CD4-positive, alpha-beta memory T cell (primary cell): ENCODE measurements at regions of chr2 and their contacts with region 1.

Region 1: GRCh38 chr2:85595301-85596025 is at the start of gene RNF181:
- DNase-seq: peak; percentile 88 to 97 (median 91)
- H3K4me3 ChIP-seq: peak within 1 kb of the TSS; percentile 49 to 96
- H3K4me3 Mint-ChIP-seq: peak within 1 kb of the TSS; percentile 96 to 99 (median 98)
- H3K27ac ChIP-seq: peak within 1 kb of the TSS; percentile 86
- H3K27ac Mint-ChIP-seq: peak within 1 kb of the TSS; percentile 95 to 99 (median 97)
- H3K4me1 ChIP-seq: peaks cover 26% of the 10 kb centered on the region
- H3K4me1 Mint-ChIP-seq: peaks cover 25 to 42% (median 32%) of the 10 kb centered on the region in 4 donors
- H3K27me3 ChIP-seq: no peaks in the 10 kb centered on the region
- H3K27me3 Mint-ChIP-seq: no peaks in the 10 kb centered on the region
- total RNA-seq, gene RNF181: 73.6 to 77.1 TPM

Region 2: DNA sequence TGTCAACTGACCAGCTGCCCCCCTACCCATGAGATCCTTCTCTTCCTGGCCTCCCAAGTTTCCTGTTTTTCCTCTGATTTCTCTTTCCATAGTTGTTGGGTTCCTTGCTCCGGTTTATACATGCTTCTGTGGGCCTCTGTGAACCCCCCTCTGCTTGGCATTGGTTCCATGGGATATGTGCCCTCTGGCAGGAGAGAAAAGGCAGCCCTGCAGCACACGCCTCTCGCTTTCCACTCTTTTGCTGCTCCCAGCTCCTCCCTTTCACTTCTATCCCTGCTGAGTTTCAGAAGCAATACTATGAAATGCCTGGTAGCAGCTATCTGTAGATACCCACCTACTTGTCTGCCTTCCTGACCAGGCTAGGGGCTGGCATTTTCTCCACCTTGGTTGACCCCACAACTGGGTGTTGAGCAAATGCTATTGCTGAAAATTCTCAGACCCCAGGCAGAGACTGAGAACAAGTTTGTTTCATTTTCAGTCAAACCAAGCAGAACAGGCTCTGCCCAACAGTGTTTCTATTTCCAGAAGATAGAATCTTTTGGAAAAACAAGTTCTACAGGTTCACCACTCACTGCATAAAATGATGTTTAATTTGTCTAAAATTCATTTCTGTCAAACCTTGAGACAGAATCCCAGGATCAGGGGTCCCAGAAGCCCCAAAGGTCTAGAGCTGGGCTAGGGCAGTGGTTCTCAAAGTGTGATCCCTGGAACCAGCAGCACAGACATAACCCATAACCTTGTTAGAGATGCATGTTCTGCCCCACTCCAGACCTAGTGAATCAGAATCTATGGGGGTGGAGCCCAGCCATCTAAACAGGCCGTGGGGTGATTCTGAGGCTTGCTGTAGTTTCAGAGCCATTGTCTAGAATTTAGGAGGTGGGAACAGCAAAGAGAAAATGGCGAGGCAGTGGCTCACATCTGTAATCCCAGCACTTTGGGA is 198.7 kb before region 1 on chr2:
- CTCF ChIA-PET with region 1: no interaction called
- POLR2A ChIA-PET with region 1: no interaction called
- intact Hi-C with region 1: no loop called
- DNase-seq: no peak
- H3K4me3 ChIP-seq: no peak overlapping the region
- H3K4me3 Mint-ChIP-seq: no peak overlapping the region
- H3K27ac ChIP-seq: no peak overlapping the region
- H3K27ac Mint-ChIP-seq: peak overlapping the region in 6 of 7 donors; percentile 24 to 83 (median 46)
- H3K4me1 ChIP-seq: peaks cover 11% of the 10 kb centered on the region
- H3K4me1 Mint-ChIP-seq: peaks cover 4 to 6% (median 5%) of the 10 kb centered on the region in 4 donors
- H3K27me3 ChIP-seq: no peaks in the 10 kb centered on the region
- H3K27me3 Mint-ChIP-seq: no peaks in the 10 kb centered on the region

Region 3: GRCh38 chr2:85420536-85421259 is 174.8 kb before region 1 on chr2:
- CTCF ChIA-PET with region 1: interaction called, 3 read pairs
- POLR2A ChIA-PET with region 1: interaction called, 23 read pairs
- intact Hi-C with region 1: no loop called
- DNase-seq: peak; percentile 81 to 87 (median 81)
- H3K4me3 ChIP-seq: no peak overlapping the region
- H3K4me3 Mint-ChIP-seq: peak overlapping the region; percentile 72 to 84 (median 78)
- H3K27ac ChIP-seq: peak overlapping the region; percentile 12
- H3K27ac Mint-ChIP-seq: peak overlapping the region; percentile 76 to 93 (median 90)
- H3K4me1 ChIP-seq: peaks cover 28% of the 10 kb centered on the region
- H3K4me1 Mint-ChIP-seq: peaks cover 12 to 29% (median 19%) of the 10 kb centered on the region in 4 donors
- H3K27me3 ChIP-seq: no peaks in the 10 kb centered on the region
- H3K27me3 Mint-ChIP-seq: no peaks in the 10 kb centered on the region

Region 4: DNA sequence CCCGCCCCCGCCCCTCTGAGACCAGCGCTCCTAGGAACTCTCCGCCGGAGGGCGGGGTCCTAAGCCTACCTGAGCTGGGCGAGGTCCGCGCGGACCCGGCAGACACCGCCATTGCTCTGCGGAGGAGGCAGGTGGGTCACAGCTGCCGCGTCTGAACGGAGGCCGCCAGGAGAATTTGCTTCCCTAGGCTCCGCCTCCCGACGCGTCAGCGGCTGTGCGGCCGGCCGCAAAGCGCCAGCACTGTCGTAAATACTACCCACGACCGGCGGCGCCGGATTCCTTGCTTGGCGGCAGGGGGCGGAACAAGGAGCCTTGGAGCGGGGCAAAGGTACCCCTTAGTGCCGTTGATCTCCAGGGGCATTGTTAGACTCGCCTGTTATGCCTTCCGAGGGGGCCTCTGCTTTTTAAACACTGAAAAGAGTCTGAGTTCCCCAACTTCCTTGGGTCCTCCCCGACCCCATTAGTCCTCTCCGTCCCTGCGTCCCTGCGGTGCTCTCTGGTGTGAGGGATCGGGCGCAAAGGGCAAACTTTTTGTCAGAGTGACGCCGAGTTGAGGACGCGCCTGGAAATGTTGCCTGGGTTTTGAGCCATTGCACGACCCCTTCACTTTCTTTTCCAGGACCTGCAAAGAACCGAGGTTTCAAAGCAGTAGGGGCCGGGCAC is 34.0 kb before region 1 on chr2 and contains the start of gene GGCX:
- CTCF ChIA-PET with region 1: interaction called, 4 read pairs
- POLR2A ChIA-PET with region 1: interaction called, 30 read pairs
- intact Hi-C with region 1: loop called (anchors 1 kb)
- DNase-seq: peak; percentile 86 to 95 (median 87)
- H3K4me3 ChIP-seq: peak within 1 kb of the TSS; percentile 74 to 97
- H3K4me3 Mint-ChIP-seq: peak within 1 kb of the TSS; percentile 94 to 99 (median 98)
- H3K27ac ChIP-seq: peak within 1 kb of the TSS; percentile 89
- H3K27ac Mint-ChIP-seq: peak within 1 kb of the TSS; percentile 94 to 99 (median 97)
- H3K4me1 ChIP-seq: peaks cover 19% of the 10 kb centered on the region
- H3K4me1 Mint-ChIP-seq: peaks cover 12 to 35% (median 22%) of the 10 kb centered on the region in 4 donors
- H3K27me3 ChIP-seq: no peaks in the 10 kb centered on the region
- H3K27me3 Mint-ChIP-seq: no peaks in the 10 kb centered on the region
- total RNA-seq, gene GGCX: 28.5 to 38.1 TPM

Region 5: DNA sequence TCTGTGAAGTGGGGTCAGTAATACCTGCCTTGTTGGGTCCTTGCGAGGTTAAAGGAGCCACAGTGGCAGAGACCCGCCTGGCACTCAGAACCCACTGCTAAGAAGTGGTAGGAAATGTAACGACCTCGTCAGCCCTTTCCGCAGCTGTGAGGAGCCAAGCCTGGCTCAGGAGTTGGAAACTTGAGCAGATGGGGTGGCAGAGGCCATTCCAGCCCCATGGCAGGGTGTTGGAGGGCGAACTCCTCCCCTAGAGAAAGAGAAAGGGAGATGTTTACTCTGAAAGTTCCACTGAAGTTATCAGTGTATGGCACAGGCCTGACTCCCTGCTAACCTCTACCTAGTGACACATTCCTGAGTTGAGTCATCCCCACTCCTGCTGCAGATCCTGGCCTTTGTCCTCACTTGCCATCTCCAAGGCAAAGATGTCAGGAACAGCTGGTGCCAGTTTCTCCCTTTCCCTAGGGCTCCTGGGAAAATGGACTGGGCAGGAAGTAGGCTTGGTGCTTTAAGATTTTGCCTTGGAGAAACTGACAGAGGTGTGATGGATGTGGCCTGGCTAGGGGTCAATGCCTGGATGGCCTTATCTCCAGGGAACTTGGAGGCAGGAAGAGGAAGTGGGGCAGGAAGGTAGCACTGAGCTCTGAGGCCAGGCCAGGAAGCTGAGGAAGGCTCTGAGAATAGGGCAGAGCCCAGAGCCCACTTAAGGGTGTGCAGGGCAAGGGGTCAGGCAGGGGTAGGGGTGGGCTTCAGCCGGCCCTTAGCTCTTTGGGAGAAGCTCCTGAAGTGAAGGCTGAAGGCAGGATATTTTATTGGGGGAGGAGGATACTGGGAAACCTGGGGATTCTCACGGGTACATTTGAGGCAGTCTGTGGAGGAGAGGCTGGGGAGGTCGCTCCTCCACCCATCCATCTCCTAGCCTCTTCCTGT is 10.3 kb before region 1 on chr2:
- CTCF ChIA-PET with region 1: interaction called, 6 read pairs
- POLR2A ChIA-PET with region 1: interaction called, 71 read pairs
- intact Hi-C with region 1: no loop called
- DNase-seq: peak in 3 of 5 donors; percentile 24 to 32 (median 24)
- H3K4me3 ChIP-seq: peak overlapping the region; percentile 57 to 64
- H3K4me3 Mint-ChIP-seq: peak overlapping the region; percentile 88 to 98 (median 90)
- H3K27ac ChIP-seq: peak overlapping the region; percentile 80
- H3K27ac Mint-ChIP-seq: peak overlapping the region; percentile 85 to 94 (median 92)
- H3K4me1 ChIP-seq: peaks cover 41% of the 10 kb centered on the region
- H3K4me1 Mint-ChIP-seq: peaks cover 38 to 68% (median 52%) of the 10 kb centered on the region in 4 donors
- H3K27me3 ChIP-seq: no peaks in the 10 kb centered on the region
- H3K27me3 Mint-ChIP-seq: no peaks in the 10 kb centered on the region

Region 6: GRCh38 chr2:85635636-85636035 is 40.2 kb after region 1 on chr2:
- CTCF ChIA-PET with region 1: interaction called, 15 read pairs
- POLR2A ChIA-PET with region 1: interaction called, 10 read pairs
- intact Hi-C with region 1: no loop called
- DNase-seq: no peak
- H3K4me3 ChIP-seq: no peak overlapping the region
- H3K4me3 Mint-ChIP-seq: no peak overlapping the region
- H3K27ac ChIP-seq: no peak overlapping the region
- H3K27ac Mint-ChIP-seq: peak overlapping the region in 2 of 7 donors; percentile 18 to 36
- H3K4me1 ChIP-seq: no peaks in the 10 kb centered on the region
- H3K4me1 Mint-ChIP-seq: peaks cover 11 to 18% (median 14%) of the 10 kb centered on the region in 4 donors
- H3K27me3 ChIP-seq: no peaks in the 10 kb centered on the region
- H3K27me3 Mint-ChIP-seq: no peaks in the 10 kb centered on the region